PC-9 (cell line): ENCODE measurements at regions of chr2 and their contacts with region 1.

Region 1: DNA sequence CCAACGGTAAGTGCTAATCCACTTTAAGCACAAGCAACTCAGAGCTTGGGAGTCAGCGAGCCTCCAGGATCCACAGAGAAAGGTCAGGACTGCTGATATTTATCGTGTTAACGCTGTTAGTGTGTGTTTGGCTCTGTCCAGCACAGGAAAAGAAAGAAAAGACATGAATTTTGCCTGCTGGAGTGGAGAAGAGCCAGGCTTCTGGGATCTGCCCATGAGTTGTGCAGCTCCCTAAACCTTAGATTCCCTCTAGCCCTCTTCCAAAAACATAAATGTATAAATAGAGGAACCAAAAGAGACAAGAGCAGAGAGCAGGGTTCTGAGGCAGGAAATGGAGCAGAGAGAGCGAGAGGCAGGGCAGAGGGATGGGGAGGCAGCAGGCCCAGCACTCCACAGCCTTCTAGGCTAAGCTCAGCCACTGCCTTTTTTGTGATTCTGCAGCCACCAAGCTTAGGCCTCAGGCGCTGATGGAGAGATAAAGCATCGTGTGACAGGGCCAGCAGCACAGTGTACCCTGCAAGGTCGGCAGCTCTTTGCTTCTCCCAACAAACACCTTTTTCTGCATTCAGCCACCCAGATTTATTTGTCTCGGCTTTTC is 14.5 kb upstream of the MAT2A start:
- DNase-seq: peak; percentile 69
- H3K4me3 ChIP-seq: no peak overlapping the region
- H3K27ac ChIP-seq: no peak overlapping the region
- H3K4me1 ChIP-seq: peaks cover 17% of the 10 kb centered on the region
- H3K27me3 ChIP-seq: no peaks in the 10 kb centered on the region
- CTCF ChIP-seq: no peak

Region 2: GRCh38 chr2:85369500-85369899 is 154.9 kb before region 1 on chr2:
- CTCF ChIA-PET with region 1: no interaction called
- POLR2A ChIA-PET with region 1: interaction called, 11 read pairs
- intact Hi-C with region 1: no loop called
- DNase-seq: no peak
- H3K4me3 ChIP-seq: no peak overlapping the region
- H3K27ac ChIP-seq: no peak overlapping the region
- H3K4me1 ChIP-seq: no peaks in the 10 kb centered on the region
- H3K27me3 ChIP-seq: no peaks in the 10 kb centered on the region
- CTCF ChIP-seq: no peak

Region 3: DNA sequence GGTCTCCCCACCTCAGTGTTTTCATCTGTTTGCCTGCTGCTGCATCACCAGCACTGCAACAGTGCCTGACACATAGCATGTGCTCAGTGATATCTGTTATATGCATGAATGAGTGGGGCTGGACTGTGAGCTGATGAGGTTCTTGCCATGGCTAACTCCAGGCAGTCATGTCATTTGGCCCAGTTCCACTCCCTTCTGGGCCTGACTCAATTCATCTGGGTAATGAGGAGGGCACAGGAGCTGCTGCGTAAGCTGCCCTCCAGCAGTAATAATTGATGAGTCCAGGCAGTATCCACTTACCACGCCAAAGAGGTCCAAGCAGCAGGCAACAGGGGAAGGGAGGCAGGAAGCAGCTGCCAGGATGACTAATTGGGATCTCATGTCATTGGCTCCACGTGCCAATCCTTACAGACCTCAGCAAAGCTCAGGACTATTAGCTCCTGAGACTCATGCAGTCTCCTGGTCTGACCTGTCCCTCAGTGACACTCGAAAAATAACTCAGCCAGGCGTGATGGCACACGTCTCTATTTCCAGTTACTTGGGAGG is 19.6 kb before region 1 on chr2:
- CTCF ChIA-PET with region 1: interaction called, 4 read pairs
- POLR2A ChIA-PET with region 1: interaction called, 19 read pairs
- intact Hi-C with region 1: no loop called
- DNase-seq: peak; percentile 67 to 98
- H3K4me3 ChIP-seq: no peak overlapping the region
- H3K27ac ChIP-seq: peak overlapping the region; percentile 63
- H3K4me1 ChIP-seq: peaks cover 47% of the 10 kb centered on the region
- H3K27me3 ChIP-seq: no peaks in the 10 kb centered on the region
- CTCF ChIP-seq: no peak